KBM-7 (cell line): ENCODE measurements at regions of chr16 and their contacts with region 1.

Region 1: DNA sequence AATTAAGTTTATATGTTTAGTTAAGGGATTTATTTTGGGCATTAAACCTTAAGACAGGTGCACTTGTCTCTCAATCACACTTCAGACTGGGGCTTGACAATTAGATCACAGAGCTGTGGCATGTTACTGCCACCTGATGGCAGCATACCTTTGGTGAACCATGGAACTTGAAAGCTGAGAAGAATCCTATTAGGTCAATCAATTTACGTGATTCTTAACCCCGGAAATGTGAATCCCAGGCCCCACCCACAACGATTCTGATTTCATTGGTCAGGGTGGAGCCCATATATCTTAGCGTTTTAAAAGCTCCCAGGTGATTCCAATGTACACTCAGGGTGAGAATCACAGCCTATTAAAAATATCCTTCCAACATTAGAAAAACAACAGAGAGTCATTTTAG is 91.0 kb downstream of the GSG1L start:
- DNase-seq: peak; percentile 46

Region 2: DNA sequence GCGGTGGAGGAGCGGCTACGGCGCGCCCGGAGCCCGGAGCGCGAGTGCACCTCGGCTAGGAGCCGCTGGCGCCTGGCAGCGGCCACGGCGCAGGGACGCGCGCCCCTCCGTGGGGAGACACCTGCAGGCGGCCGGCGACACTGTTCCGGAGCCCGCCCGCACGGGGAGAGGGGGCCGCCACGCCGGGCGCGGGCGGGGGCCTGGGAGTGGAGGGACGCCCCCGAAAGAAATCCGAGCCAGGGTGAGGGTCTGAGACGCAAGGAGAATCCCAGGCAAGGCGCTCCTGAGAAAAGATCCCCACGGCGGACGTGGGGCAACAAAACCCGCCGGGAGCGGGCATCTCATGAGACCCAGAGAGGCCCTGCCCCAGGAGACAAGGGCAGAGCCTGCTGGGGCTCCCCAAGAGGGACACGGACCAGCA is 91.2 kb after region 1 on chr16 and contains the start of gene GSG1L:
- in situ Hi-C with region 1: loop called (anchors 10 kb)
- DNase-seq: no peak